H1 (cell line): ENCODE measurements at regions of chr9 and their contacts with region 1.

Region 1: DNA sequence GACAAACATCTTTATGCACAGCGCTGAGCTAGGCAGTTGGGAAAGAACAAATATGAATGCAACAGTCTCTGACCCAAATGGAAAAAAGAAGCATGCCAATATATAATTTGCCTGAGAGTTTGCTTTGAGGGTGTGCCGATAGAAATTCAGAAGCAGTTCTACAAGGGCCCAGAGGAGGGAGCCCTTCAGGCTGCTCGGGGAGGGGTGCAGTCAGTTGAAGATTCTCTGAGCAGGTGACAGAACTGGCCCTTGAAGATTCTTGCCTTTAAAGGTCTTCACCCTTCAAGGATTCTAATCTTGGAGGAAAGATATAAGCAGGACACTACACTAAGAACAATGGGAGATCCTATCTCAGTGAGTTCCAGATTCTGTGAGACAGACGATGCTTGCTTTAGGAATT is 3.7 kb upstream of the PAPPA start:
- DNase-seq: peak in 1 of 2 experiments; percentile 75
- H3K4me3 ChIP-seq: no peak overlapping the region
- H3K27ac ChIP-seq: no peak overlapping the region
- H3K4me1 ChIP-seq: no peaks in the 10 kb centered on the region; a peak in 1 of 7 replicates
- H3K27me3 ChIP-seq: peaks cover 2 to 10% (median 6%) of the 10 kb centered on the region in 4 experiments; a peak in 6 of 7 replicates
- CTCF ChIP-seq: peak; percentile 71 to 90 (median 81)
- EP300 ChIP-seq: no peak
- POLR2A ChIP-seq: no peak
- RAD21 ChIP-seq: peak; percentile 78 to 85

Region 2: GRCh38 chr9:115883457-115884329 is 266.2 kb before region 1 on chr9:
- CTCF ChIA-PET with region 1: interaction called, 17 read pairs
- POLR2A ChIA-PET with region 1: no interaction called
- DNase-seq: no peak
- H3K4me3 ChIP-seq: no peak overlapping the region
- H3K27ac ChIP-seq: no peak overlapping the region
- H3K4me1 ChIP-seq: no peaks in the 10 kb centered on the region
- H3K27me3 ChIP-seq: no peaks in the 10 kb centered on the region
- CTCF ChIP-seq: peak; percentile 73 to 82 (median 77)
- EP300 ChIP-seq: no peak
- POLR2A ChIP-seq: no peak
- RAD21 ChIP-seq: peak; percentile 86 to 91

Region 3: DNA sequence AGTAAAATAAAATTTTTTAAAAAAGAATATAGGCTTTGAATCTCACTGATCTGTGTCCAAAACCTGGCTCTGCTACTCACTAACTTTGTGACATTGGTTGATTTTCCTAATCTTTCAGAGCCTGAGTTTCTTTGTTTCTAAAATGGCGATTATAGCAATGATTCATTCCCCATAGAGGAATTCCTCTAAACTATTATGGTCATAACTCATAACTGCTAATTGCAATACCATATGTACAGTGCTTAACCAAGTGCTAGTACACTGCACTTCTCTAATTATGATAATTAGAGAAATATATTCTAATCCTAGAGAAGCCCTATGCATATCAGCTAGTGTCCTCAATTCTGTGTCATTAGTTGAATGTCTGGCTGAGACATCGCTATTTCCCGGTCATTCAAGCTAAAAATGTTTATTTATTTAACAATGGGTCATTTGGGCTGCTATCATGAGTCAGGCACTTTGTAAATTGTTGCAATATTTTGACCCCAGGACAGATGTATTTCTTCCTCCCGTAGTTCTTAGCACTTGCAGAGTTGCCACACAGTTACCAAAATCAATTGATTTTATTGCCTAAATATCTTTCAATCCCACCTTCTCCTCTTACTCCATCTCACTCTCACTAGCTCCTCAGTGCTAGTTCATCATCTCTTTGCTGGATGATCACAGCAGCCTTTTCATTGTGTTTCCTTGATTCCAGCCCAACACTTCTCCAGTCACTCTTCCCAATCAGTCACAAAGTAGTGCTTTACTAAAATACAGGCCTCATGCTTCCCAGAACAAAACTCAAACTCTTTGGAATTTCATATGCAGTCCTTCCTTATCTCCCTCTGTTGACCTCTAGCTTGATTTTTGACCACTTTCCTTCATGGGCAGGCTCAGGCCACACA is 197.2 kb before region 1 on chr9:
- CTCF ChIA-PET with region 1: no interaction called
- POLR2A ChIA-PET with region 1: no interaction called
- DNase-seq: no peak
- H3K4me3 ChIP-seq: no peak overlapping the region
- H3K27ac ChIP-seq: no peak overlapping the region
- H3K4me1 ChIP-seq: no peaks in the 10 kb centered on the region
- H3K27me3 ChIP-seq: no peaks in the 10 kb centered on the region
- CTCF ChIP-seq: no peak
- EP300 ChIP-seq: no peak
- POLR2A ChIP-seq: no peak
- RAD21 ChIP-seq: no peak

Region 4: GRCh38 chr9:116081435-116082120 is 68.3 kb before region 1 on chr9:
- CTCF ChIA-PET with region 1: no interaction called
- POLR2A ChIA-PET with region 1: no interaction called
- DNase-seq: no peak
- H3K4me3 ChIP-seq: no peak overlapping the region
- H3K27ac ChIP-seq: no peak overlapping the region
- H3K4me1 ChIP-seq: no peaks in the 10 kb centered on the region
- H3K27me3 ChIP-seq: no peaks in the 10 kb centered on the region; a peak in 1 of 7 replicates
- CTCF ChIP-seq: no peak
- EP300 ChIP-seq: no peak
- POLR2A ChIP-seq: no peak
- RAD21 ChIP-seq: no peak

Region 5: GRCh38 chr9:116137581-116137980 is 12.3 kb before region 1 on chr9:
- CTCF ChIA-PET with region 1: interaction called, 28 read pairs
- POLR2A ChIA-PET with region 1: no interaction called
- DNase-seq: no peak
- H3K4me3 ChIP-seq: no peak overlapping the region
- H3K27ac ChIP-seq: no peak overlapping the region
- H3K4me1 ChIP-seq: no peaks in the 10 kb centered on the region
- H3K27me3 ChIP-seq: no peaks in the 10 kb centered on the region
- CTCF ChIP-seq: no peak
- EP300 ChIP-seq: no peak
- POLR2A ChIP-seq: no peak
- RAD21 ChIP-seq: no peak

Region 6: DNA sequence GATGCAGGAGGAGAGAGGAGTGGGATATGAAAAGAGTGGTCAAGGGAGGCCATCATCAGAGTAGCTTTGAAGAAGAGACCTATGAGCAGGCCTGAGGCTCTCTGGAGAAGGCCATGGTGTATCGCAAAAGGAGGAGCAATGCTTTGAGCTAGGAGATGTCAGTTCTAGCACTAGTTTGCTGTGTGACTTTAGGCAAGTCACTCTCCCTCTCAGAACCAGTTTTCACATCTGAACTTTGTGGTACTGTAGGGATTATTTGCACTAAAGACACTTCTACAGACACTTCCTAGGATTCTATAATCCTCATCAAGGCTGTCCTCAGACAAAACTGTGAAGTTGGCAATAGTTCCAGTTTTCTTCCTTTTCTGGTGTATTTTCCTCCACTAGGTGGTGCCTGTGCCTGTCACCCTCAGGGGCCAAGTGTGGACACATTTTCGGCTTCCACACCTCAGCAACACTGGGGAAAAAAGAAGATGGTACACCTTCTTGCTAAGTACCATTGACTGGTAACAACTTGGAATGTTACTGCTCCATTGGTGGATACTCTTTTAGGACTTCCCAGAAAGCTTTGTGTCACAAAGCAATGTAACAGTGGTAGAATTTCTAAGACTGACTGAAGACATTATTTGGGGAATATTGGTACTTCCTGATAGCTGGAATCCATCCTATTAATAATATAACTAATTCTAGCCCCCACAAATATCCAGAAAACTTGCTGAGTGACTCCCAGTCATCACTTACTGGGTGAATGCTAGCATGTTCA is 13.6 kb after region 1 on chr9:
- CTCF ChIA-PET with region 1: interaction called, 29 read pairs
- POLR2A ChIA-PET with region 1: no interaction called
- DNase-seq: no peak
- H3K4me3 ChIP-seq: no peak overlapping the region
- H3K27ac ChIP-seq: no peak overlapping the region
- H3K4me1 ChIP-seq: no peaks in the 10 kb centered on the region
- H3K27me3 ChIP-seq: peaks cover 0 to 4% (median 1%) of the 10 kb centered on the region in 4 experiments; a peak in 3 of 7 replicates
- CTCF ChIP-seq: peak; percentile 52 to 69 (median 61)
- EP300 ChIP-seq: no peak
- POLR2A ChIP-seq: no peak
- RAD21 ChIP-seq: peak; percentile 77 to 82

Region 7: GRCh38 chr9:116286297-116286696 is 136.5 kb after region 1 on chr9:
- CTCF ChIA-PET with region 1: interaction called, 10 read pairs
- POLR2A ChIA-PET with region 1: no interaction called
- DNase-seq: peak; percentile 68 to 73
- H3K4me3 ChIP-seq: peak overlapping the region in 1 of 4 experiments; percentile 42; a peak in 4 of 8 replicates
- H3K27ac ChIP-seq: no peak overlapping the region
- H3K4me1 ChIP-seq: peaks cover 2 to 27% (median 16%) of the 10 kb centered on the region in 4 experiments; a peak in 6 of 7 replicates
- H3K27me3 ChIP-seq: peaks cover 4 to 46% (median 35%) of the 10 kb centered on the region in 4 experiments
- CTCF ChIP-seq: no peak
- EP300 ChIP-seq: peak in 1 of 2 experiments; percentile 95; a peak in 1 of 3 replicates
- POLR2A ChIP-seq: no peak
- RAD21 ChIP-seq: peak in 1 of 2 experiments; percentile 8; a peak in 1 of 4 replicates

Region 8: GRCh38 chr9:116494815-116495634 is 345.2 kb after region 1 on chr9:
- CTCF ChIA-PET with region 1: interaction called, 18 read pairs
- POLR2A ChIA-PET with region 1: interaction called, 3 read pairs
- DNase-seq: peak in 1 of 2 experiments; percentile 74
- H3K4me3 ChIP-seq: no peak overlapping the region
- H3K27ac ChIP-seq: no peak overlapping the region
- H3K4me1 ChIP-seq: peaks cover 0 to 4% (median 3%) of the 10 kb centered on the region in 4 experiments; a peak in 2 of 7 replicates
- H3K27me3 ChIP-seq: no peaks in the 10 kb centered on the region
- CTCF ChIP-seq: peak; percentile 75 to 92 (median 76)
- EP300 ChIP-seq: no peak
- POLR2A ChIP-seq: no peak
- RAD21 ChIP-seq: peak; percentile 77 to 78

Region 9: DNA sequence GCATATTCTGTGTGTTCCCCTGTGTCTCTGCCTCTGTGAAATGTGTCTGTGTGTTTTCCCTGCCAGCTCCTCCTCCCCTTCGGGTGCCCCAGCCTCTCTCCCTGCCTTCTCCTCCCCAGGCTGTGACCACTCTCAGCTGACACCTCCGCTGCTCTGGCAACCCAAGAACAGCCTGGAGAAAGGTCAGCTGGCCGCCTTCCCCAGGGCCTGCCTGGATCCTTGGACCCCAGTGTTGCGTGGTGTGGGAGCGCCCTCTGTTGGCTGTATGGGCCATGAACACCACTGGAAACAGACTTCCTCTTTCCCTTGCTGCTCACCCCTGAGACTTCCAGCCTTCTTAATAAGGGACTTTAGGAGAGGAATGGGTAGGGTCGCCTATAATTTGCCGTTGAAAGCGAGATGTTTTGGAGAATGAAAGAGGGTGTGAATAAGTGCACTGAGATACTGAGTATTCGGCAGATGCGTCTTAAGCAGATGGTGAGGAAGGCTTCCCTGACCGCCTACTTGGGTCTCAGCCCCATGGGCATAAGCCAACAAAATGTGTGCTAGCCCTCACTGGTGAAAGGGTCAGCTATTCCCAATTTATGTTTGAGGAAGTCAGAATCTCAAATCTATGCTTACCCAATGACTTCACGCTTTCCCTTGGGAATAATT is 422.4 kb after region 1 on chr9:
- CTCF ChIA-PET with region 1: interaction called, 38 read pairs
- POLR2A ChIA-PET with region 1: no interaction called
- DNase-seq: peak; percentile 46 to 91
- H3K4me3 ChIP-seq: no peak overlapping the region
- H3K27ac ChIP-seq: no peak overlapping the region
- H3K4me1 ChIP-seq: peaks cover 0 to 3% (median under 1%) of the 10 kb centered on the region in 4 experiments; a peak in 3 of 7 replicates
- H3K27me3 ChIP-seq: no peaks in the 10 kb centered on the region
- CTCF ChIP-seq: peak; percentile 92 to 96 (median 95)
- EP300 ChIP-seq: no peak
- POLR2A ChIP-seq: no peak
- RAD21 ChIP-seq: peak; percentile 99 to 100